Lower leg skin (tissue), 4 donors: ENCODE measurements at regions of chr3 and their contacts with region 1.

Region 1: DNA sequence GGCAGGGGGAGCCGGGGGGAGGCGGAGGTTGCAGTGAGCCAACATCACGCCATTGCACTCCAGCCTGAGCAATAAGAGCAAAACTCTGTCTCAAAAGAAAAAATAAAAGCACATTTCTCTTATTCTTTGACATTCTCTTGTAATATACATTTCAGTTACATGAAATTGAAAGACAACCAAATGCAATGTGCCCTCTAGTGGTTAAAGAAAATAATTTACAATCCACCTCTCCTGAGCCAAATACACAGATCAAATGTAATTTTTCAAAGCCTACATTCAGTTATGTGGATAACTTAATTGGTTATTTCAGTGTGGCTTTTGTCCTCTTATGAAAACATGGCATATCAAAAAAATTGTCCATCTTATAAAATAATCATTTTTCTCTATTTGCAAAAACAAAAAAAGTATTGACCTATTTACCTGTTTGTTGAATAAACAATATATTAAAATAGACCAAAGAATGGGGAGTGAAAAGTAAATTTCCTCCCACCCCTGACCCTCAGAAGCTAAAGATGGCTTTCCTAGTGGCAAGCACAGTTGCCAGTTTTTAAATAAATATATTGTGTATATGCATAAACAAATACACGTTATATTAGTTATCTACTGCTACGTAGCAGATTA is 14.2 kb upstream of the U2SURP start:
- DNase-seq: no peak
- H3K4me3 ChIP-seq: no peak overlapping the region
- CTCF ChIP-seq: peak in 1 of 3 donors; percentile 34
- POLR2A ChIP-seq: no peak

Region 2: DNA sequence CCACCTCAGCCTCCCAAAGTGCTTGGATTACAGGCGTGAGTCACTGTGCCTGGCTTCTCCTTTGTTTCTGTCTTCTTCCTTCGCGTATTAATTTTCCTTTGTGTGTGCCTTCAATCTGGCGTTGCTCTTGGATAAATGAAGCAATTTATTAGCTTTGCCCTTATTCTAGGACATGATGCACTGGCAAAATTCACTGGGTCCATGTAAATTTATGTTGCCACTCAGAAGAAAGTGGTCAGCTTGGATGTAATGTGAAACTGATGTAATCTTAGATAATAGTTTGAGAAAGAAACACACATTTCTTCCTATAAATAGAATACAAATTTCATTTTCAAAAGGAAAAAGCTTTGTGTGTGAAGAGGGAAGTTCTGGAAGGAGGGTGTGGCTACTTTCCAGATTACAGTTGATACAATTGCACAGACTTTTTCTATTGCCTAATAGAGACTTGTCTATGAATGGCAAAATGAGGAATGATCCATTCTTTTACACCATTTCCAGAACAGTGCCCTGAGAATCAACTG is 1134.0 kb before region 1 on chr3:
- intact Hi-C with region 1: no loop called
- DNase-seq: no peak
- H3K4me3 ChIP-seq: no peak overlapping the region
- CTCF ChIP-seq: no peak
- POLR2A ChIP-seq: no peak

Region 3: DNA sequence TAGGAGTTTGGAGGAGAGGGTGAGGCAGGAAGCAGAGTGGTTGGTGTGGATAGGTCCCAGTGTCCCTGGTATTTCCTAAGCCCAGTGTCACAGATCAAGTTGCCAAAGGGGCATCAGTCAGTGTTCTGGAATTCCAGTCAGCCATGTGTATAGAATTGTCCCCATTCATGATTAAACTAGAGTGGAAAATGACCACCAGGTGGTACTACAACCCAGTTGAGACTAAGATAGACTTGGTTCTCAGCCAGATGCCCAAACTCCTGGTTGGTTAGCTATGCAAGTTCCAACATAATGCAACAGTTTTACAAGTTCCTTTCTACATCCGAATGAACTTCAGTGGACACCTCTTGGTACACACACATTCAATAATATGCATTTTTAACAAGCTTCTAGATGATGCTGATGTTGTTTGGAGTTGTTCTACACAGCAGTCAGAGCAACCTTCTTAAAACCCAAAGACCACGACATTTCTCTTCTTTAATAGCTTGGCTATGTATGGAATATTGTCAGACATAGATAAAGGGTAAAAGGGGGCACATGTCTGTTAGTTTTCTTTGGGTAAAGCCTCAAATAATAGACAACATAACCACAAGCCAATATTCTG is 400.3 kb before region 1 on chr3:
- intact Hi-C with region 1: loop called (anchors 10 kb)
- DNase-seq: peak in 1 of 2 donors; percentile 38
- H3K4me3 ChIP-seq: no peak overlapping the region
- CTCF ChIP-seq: no peak
- POLR2A ChIP-seq: no peak

Region 4: DNA sequence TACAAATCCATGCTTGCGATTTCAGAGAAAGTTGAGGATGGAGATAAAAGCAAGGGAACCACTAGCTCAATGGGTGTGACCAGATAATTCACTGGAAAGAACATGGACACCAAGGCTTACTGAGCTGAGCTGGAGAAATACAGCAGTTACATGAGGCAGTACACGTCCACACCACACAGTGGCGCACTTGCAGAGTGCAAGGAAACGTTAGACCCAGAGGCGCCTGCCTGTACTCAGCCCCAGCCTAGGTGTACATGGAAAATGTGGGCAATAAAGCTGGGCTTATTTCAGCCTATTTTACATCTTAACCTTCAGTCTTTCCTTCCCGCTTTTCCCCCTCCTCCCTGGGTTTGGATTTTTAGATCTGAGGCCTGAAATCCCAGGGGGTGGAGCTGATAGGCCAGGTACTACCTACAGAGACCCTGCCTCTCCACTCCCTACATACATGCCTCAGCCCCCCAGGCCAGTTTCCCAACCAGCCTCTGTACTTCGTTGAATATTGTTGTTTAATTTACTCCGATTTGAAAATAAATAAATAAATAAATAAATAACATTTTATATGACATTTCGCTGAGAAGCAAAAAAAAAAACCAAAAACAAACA is 158.4 kb before region 1 on chr3:
- intact Hi-C with region 1: loop called (anchors 5 kb)
- DNase-seq: peak; percentile 79 to 95
- H3K4me3 ChIP-seq: no peak overlapping the region
- CTCF ChIP-seq: peak in 1 of 3 donors; percentile 57
- POLR2A ChIP-seq: no peak

Region 5: DNA sequence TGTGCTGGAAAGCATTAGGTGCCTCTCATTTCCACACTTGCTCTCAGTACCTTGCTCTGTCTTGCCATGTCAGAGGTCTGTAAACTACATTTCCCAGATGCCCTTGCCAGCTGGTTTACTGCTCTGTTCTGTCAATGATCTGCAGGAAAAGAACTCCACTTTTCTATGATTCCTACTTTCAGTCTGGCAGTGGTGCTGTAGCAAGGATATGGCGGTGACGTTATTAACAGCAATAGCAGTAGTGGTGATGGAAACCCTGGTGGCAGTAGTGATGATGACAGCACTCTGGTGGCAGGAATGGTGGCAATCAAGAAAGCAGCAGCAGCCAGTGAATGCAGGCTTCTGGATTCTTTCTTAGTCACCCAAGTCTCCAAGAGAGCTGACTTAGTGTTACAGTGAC is 1649.6 kb after region 1 on chr3:
- intact Hi-C with region 1: no loop called
- DNase-seq: no peak
- H3K4me3 ChIP-seq: no peak overlapping the region
- CTCF ChIP-seq: no peak
- POLR2A ChIP-seq: no peak